ENCODE measurements at regions of chr7 and their contacts with region 1.

Region 1: DNA sequence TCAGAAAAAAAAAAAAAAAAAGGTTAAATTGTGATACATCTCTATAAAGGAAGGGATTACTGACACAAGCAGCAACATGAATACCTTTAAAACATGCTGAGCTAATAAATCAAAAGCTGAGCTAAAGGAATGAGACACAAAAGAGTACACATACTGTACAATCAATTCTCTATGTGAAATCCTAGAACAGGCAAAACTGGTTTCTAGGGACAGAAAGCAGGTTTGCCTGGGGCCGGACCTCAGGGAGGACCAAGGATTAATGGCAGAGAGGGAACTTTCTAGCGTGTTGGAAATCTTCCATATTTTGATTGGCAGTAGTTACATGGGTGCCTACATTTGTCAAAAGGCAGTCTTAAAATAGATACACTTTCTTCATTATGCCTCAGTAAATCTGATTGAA is 52.5 kb downstream of the KLRG2 start:
- DNase-seq: no peak
- ATAC-seq: no peak
- H3K4me3 ChIP-seq: no peak overlapping the region
- H3K27ac ChIP-seq: no peak overlapping the region
- H3K4me1 ChIP-seq: no peaks in the 10 kb centered on the region
- H3K27me3 ChIP-seq: no peaks in the 10 kb centered on the region
- CTCF ChIP-seq: no peak
- EP300 ChIP-seq: no peak
- POLR2A ChIP-seq: no peak
- RAD21 ChIP-seq: no peak

Region 2: GRCh38 chr7:139416405-139416804 is 14.6 kb before region 1 on chr7:
- CTCF ChIA-PET with region 1: interaction called, 11 read pairs
- POLR2A ChIA-PET with region 1: interaction called, 5 read pairs
- RAD21 ChIA-PET with region 1: interaction called, 6 read pairs
- SMC1A ChIA-PET with region 1: interaction called, 5 read pairs
- in situ Hi-C with region 1: no loop called
- intact Hi-C with region 1: no loop called
- DNase-seq: no peak
- ATAC-seq: no peak
- H3K4me3 ChIP-seq: no peak overlapping the region
- H3K27ac ChIP-seq: no peak overlapping the region
- H3K4me1 ChIP-seq: no peaks in the 10 kb centered on the region
- H3K27me3 ChIP-seq: no peaks in the 10 kb centered on the region
- CTCF ChIP-seq: no peak
- EP300 ChIP-seq: no peak
- POLR2A ChIP-seq: no peak
- RAD21 ChIP-seq: no peak

Region 3: GRCh38 chr7:139494835-139495579 is 64.0 kb after region 1 on chr7:
- CTCF ChIA-PET with region 1: interaction called, 25 read pairs
- POLR2A ChIA-PET with region 1: interaction called, 5 read pairs
- RAD21 ChIA-PET with region 1: interaction called, 9 read pairs
- SMC1A ChIA-PET with region 1: interaction called, 6 read pairs
- in situ Hi-C with region 1: no loop called
- intact Hi-C with region 1: loop called (anchors 5 kb)
- DNase-seq: peak; percentile 47
- ATAC-seq: peak; percentile 88
- H3K4me3 ChIP-seq: 0 out of 2 replicates have a peak overlapping the region, but pooled peaks have one; percentile 28
- H3K27ac ChIP-seq: peak overlapping the region; percentile 84
- H3K4me1 ChIP-seq: peaks cover 24% of the 10 kb centered on the region
- H3K27me3 ChIP-seq: no peaks in the 10 kb centered on the region
- CTCF ChIP-seq: no peak
- EP300 ChIP-seq: peak; percentile 43 to 64; a peak in 2 of 4 replicates
- POLR2A ChIP-seq: no peak
- RAD21 ChIP-seq: peak; percentile 2; the same call in 1 of the 2 replicates

Region 4: GRCh38 chr7:139588632-139589031 is 157.6 kb after region 1 on chr7:
- CTCF ChIA-PET with region 1: interaction called, 16 read pairs
- POLR2A ChIA-PET with region 1: no interaction called
- RAD21 ChIA-PET with region 1: no interaction called
- SMC1A ChIA-PET with region 1: no interaction called
- in situ Hi-C with region 1: no loop called
- intact Hi-C with region 1: no loop called
- DNase-seq: no peak
- ATAC-seq: no peak
- H3K4me3 ChIP-seq: no peak overlapping the region
- H3K27ac ChIP-seq: no peak overlapping the region
- H3K4me1 ChIP-seq: no peaks in the 10 kb centered on the region
- H3K27me3 ChIP-seq: no peaks in the 10 kb centered on the region
- CTCF ChIP-seq: no peak
- EP300 ChIP-seq: no peak
- POLR2A ChIP-seq: no peak
- RAD21 ChIP-seq: no peak

Measured in GM12878 (cell line).